Transverse colon (tissue), 4 donors: ENCODE measurements at regions of chr15 and their contacts with region 1.

Region 1: GRCh38 chr15:97694456-97694855 is 266.0 kb upstream of the ARRDC4 start:
- DNase-seq: no peak
- H3K4me3 ChIP-seq: no peak overlapping the region
- H3K27ac ChIP-seq: no peak overlapping the region
- H3K4me1 ChIP-seq: no peaks in the 10 kb centered on the region
- H3K27me3 ChIP-seq: no peaks in the 10 kb centered on the region
- CTCF ChIP-seq: no peak
- EP300 ChIP-seq: no peak
- POLR2A ChIP-seq: no peak

Region 2: GRCh38 chr15:97736748-97737147 is 42.3 kb after region 1 on chr15:
- in situ Hi-C with region 1: no loop called
- intact Hi-C with region 1: loop called (anchors 2 kb)
- DNase-seq: no peak
- H3K4me3 ChIP-seq: no peak overlapping the region
- H3K27ac ChIP-seq: no peak overlapping the region
- H3K4me1 ChIP-seq: no peaks in the 10 kb centered on the region
- H3K27me3 ChIP-seq: no peaks in the 10 kb centered on the region
- CTCF ChIP-seq: no peak
- EP300 ChIP-seq: no peak
- POLR2A ChIP-seq: no peak